HepG2 (cell line): ENCODE measurements at regions of chr10 and their contacts with region 1.

Region 1: DNA sequence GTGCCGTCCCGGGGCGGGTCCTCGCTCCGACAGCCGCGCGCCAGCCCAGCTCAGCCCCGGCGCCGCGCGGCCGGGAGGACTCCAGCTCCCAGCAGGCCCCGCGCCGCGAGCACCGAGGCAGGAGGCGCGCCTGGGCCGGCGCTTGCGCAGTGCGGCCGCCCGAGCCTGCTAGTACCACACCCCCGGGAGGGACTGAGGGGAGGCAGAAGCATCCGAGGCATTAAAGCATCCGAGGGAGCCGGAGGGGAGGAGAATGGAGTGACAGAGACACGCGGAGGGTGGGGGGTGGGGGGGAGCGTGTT is at the start of gene GRK5:
- DNase-seq: peak; percentile 90
- ATAC-seq: peak; percentile 86
- H3K4me3 ChIP-seq: peak within 1 kb of the TSS; percentile 75 to 97 (median 95)
- H3K27ac ChIP-seq: peak within 1 kb of the TSS; percentile 93
- H3K4me1 ChIP-seq: peaks cover 59% of the 10 kb centered on the region
- H3K27me3 ChIP-seq: no peaks in the 10 kb centered on the region; a peak in 2 of 5 replicates
- CTCF ChIP-seq: no peak
- EP300 ChIP-seq: no peak
- POLR2A ChIP-seq: peak in 1 of 2 experiments; percentile 60; a peak in 2 of 4 replicates
- RAD21 ChIP-seq: no peak
- total RNA-seq, gene GRK5: 12.6 and 12.8 TPM in 2 replicates

Region 2: DNA sequence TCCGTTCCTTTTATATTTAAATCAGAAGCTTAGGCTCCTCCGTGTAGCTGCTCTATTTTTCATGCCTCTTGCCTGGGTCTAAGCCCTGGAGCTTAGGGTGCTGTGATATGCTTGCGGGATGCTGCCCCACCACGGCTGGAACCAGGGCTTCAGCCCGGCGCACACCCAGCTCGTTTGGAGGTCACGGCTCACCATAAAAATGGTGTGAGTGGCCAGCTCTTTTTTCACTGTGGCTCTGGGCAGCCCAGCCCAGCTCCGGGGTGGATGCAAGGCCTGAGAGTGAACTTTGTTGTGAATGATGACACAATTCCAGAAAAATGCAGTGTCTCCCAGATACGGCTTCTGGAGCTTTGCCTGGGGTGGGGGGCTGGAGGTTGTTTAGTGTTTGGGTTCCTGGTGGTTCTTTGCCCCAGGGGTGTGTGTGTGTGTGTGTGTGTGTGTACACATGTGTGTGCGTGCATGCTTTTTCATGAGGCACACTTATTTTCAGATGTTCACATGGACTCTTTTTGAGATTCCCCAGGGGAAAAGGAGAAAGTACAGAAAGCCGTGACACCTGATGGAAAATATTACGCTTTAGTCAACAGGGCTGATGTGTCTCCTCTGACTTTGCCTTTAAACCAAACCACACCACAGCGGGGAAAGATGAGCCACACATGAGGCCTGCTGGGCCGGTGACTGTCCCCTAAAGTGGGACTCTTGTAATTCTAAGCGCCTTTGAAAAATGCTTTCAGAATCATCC is 46.3 kb after region 1 on chr10:
- CTCF ChIA-PET with region 1: no interaction called
- POLR2A ChIA-PET with region 1: interaction called, 37 read pairs
- in situ Hi-C with region 1: no loop called
- intact Hi-C with region 1: loop called (anchors 1 kb)
- DNase-seq: peak; percentile 92
- ATAC-seq: peak; percentile 86
- H3K4me3 ChIP-seq: peak overlapping the region; percentile 39 to 70 (median 51); a peak in 5 of 6 replicates
- H3K27ac ChIP-seq: peak overlapping the region; percentile 90
- H3K4me1 ChIP-seq: peaks cover 74% of the 10 kb centered on the region
- H3K27me3 ChIP-seq: no peaks in the 10 kb centered on the region
- CTCF ChIP-seq: peak; percentile 33
- EP300 ChIP-seq: no peak; a peak in 1 of 4 replicates
- POLR2A ChIP-seq: no peak; a peak in 1 of 4 replicates
- RAD21 ChIP-seq: peak; percentile 41; the same call in 1 of the 2 replicates

Region 3: GRCh38 chr10:119315128-119316001 is 108.0 kb after region 1 on chr10:
- CTCF ChIA-PET with region 1: no interaction called
- POLR2A ChIA-PET with region 1: interaction called, 11 read pairs
- in situ Hi-C with region 1: no loop called
- intact Hi-C with region 1: no loop called
- DNase-seq: peak; percentile 83
- ATAC-seq: peak; percentile 21; the same call in 1 of the 3 replicates
- H3K4me3 ChIP-seq: no peak overlapping the region
- H3K27ac ChIP-seq: peak overlapping the region; percentile 95
- H3K4me1 ChIP-seq: peaks cover 82% of the 10 kb centered on the region
- H3K27me3 ChIP-seq: no peaks in the 10 kb centered on the region
- CTCF ChIP-seq: no peak
- EP300 ChIP-seq: peak in 1 of 2 experiments; percentile 10; a peak in 1 of 4 replicates
- POLR2A ChIP-seq: 0 out of 4 replicates have a peak, but pooled peaks of 1 of the 2 experiments have one; percentile 27
- RAD21 ChIP-seq: no peak

Region 4: DNA sequence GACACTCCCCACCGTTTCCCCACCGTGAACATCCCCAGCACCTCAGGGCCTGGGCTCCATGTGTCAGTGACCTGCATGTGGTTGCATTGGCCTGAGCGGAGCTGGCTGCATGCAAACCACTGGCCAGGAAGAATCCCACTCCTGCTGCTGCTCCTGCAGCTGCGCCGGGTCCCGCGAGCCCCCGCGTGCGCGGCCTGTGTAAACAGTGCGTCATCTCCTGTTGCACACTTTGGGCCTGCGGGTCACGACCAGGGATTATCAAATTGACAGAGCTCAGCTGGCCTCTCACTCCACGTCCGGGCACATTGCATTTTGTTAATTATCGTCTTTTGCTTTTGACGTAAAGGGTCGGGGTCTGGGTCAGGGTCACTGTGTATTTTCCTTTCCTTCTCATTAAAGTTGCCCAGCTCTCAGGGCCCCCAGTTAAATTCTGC is 202.6 kb after region 1 on chr10:
- CTCF ChIA-PET with region 1: no interaction called
- POLR2A ChIA-PET with region 1: interaction called, 21 read pairs
- in situ Hi-C with region 1: no loop called
- intact Hi-C with region 1: no loop called
- DNase-seq: peak; percentile 75
- ATAC-seq: peak; percentile 80
- H3K4me3 ChIP-seq: peak overlapping the region in 2 of 3 experiments; percentile 28 to 51; a peak in 3 of 6 replicates
- H3K27ac ChIP-seq: peak overlapping the region; percentile 85
- H3K4me1 ChIP-seq: peaks cover 61% of the 10 kb centered on the region
- H3K27me3 ChIP-seq: no peaks in the 10 kb centered on the region; a peak in 1 of 5 replicates
- CTCF ChIP-seq: no peak
- EP300 ChIP-seq: peak; percentile 39 to 73; a peak in 3 of 4 replicates
- POLR2A ChIP-seq: peak in 1 of 2 experiments; percentile 55; a peak in 2 of 4 replicates
- RAD21 ChIP-seq: no peak